Adrenal gland (tissue), 19 donors: ENCODE measurements at regions of chr12 and their contacts with region 1.

Region 1: GRCh38 chr12:34022079-34022830 is at the start of gene ALG10:
- DNase-seq: peak; percentile 97 to 99 (median 98)
- H3K4me3 ChIP-seq: peak within 1 kb of the TSS in 3 of 4 donors; percentile 42 to 94 (median 80)
- H3K27ac ChIP-seq: peak within 1 kb of the TSS in 4 of 5 donors; percentile 74 to 89 (median 78)
- H3K4me1 ChIP-seq: peaks cover 3 to 11% of the 10 kb centered on the region in 2 donors
- H3K27me3 ChIP-seq: no peaks in the 10 kb centered on the region
- CTCF ChIP-seq: peak; percentile 60 to 90 (median 70)
- POLR2A ChIP-seq: peak in 1 of 2 donors; percentile 42
- total RNA-seq, gene ALG10: 5.7 to 18.1 (median 10.9) TPM

Region 2: DNA sequence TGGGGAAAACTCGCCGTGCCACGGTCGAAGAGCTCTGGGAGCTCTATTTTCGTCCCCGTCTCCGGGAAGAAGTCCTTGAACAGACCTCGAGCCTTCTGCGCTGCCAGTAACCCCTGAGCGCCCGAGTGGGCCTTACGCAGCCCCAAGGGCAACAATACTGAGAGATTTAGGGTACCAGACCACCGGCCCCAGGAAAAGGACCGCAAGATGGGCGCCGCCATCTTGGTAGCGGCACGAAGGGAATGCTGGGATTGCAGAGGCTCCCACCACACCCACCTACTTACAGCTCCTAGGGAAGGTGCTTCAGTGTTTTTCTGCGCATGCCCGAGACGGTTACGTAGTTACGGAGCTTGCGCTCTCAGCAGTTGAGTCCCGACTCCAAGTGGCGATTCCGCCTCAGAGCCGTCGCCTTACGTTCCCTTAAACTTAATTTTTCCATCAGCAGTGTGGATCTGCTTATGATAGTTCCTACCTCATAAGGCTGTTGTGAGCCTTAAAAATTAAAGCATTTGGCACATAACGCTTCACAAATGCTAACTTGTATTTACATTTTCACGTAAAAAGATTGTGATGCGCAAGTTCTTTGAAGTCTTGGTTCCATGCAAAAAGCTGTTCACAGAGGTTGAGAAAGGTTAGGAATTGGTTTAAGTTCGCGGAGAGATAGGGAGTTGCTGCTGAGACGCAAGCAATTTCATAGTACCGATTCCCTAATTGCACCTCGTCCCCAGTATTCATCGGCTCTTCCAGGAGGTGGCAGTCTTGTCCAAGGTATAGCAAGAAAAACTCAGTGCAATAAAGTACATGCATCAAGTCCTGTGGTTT is 1266.4 kb before region 1 on chr12 and contains the start of gene YARS2:
- intact Hi-C with region 1: loop called in 1 of 2 experiments (anchors 5 kb)
- DNase-seq: peak; percentile 93 to 99 (median 98)
- H3K4me3 ChIP-seq: peak within 1 kb of the TSS; percentile 88 to 100 (median 92)
- H3K27ac ChIP-seq: peak within 1 kb of the TSS; percentile 76 to 94 (median 88)
- H3K4me1 ChIP-seq: peaks cover 8 to 17% of the 10 kb centered on the region in 2 donors
- H3K27me3 ChIP-seq: no peaks in the 10 kb centered on the region
- CTCF ChIP-seq: peak; percentile 63 to 96 (median 86)
- POLR2A ChIP-seq: peak; percentile 58 to 78
- total RNA-seq, gene YARS2: 14.7 to 53.4 (median 20.7) TPM